Activated T-helper 1 cell treated with anti-CD3 and anti-CD28 coated beads, Interleukin-12 subunit alpha, Interleukin-12 subunit beta, Interleukin-2, Interleukin-4 antibody, amounts not matched to agents 30 ng/mL and 10 ng/mL and 1 ng/mL, durations not matched to agents 14 hours and 24 hours and 36 hours (primary cell): ENCODE measurements at regions of chr3 and their contacts with region 1.

Region 1: DNA sequence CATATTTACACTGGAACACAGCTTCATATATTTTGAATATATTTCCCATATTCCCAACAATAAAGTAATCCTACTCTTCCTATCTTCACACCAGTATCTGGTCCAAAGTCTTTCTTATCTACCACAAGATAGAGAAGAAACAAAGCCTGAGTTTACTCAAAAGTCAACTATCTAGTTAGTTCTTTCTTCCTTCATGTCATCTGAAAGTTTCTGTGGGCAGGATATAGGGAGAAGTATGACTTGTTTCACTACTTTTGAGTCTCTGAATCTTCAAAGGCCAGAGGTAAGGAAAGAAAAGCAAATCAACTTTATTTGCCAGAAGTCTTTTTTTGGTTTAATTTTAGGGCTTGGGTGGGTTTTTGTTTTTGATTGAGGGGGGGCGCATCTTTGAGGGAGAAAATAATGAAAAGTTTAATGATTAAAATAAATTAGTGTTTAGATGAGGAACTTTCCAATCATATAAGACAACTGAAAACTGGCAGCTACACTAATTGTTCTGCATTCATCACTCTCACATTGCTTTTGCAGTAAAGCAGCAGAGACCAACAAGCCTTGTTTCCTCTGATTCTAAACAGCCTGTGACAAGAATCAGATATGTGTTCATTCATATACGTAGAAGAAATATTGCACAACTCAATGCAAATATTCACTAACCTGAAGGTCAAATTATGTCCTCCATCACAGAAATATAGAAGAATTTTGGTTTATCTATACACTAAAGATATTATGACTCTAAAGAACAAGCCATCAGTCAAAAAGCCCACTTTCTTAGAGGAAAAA is 421.4 kb downstream of the SHQ1 start:
- DNase-seq: no peak
- H3K4me3 Mint-ChIP-seq: peak overlapping the region; percentile 69
- H3K27ac Mint-ChIP-seq: peak overlapping the region; percentile 97
- H3K4me1 Mint-ChIP-seq: peaks cover 62% of the 10 kb centered on the region
- H3K27me3 Mint-ChIP-seq: no peaks in the 10 kb centered on the region

Region 2: DNA sequence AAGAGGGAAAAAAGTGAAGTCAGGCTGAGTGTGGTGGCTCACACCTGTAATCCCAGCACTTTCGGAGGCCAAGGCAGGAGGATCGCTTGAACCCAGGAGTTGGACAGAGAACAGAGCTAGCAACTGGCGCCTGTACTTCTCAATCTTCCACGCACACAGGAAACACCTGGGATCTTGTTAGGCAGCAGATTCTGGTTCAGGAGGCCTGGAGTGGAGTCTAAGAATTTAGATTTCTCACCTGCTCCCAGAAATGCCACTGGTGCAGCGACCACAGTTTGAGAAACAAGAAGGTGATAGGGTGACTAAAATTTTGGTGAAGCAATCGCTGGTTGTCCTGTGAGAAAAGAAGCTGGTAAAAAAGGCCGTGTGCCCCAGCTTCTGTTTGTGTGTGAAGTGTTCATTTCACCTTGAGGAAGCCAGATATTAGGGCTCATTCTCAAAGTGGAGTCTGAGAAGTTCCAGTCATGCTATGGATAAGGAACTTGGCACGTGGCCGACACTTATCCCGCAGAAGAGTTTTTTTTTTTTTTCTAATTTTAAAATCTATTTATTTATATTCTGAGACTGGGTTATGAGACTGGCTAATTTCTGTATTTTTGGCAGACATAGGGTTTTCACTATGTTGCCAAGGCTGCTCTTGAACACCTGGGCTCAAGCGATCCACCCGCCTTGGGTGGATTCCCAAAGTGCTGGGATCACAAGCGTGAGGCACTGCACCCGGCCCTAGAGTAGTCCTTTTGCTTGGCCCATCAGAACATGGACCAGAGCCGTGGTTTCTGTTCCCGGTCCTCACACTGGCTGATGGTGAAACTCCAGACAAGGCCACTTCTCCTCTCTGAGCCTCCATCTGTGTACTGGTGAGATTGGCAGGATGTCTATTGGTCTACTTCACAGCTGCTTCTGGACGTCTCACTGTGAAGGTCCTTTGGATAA is 317.2 kb before region 1 on chr3:
- intact Hi-C with region 1: no loop called
- DNase-seq: no peak
- H3K4me3 Mint-ChIP-seq: no peak overlapping the region
- H3K27ac Mint-ChIP-seq: no peak overlapping the region
- H3K4me1 Mint-ChIP-seq: no peaks in the 10 kb centered on the region
- H3K27me3 Mint-ChIP-seq: peaks cover 12% of the 10 kb centered on the region

Region 3: DNA sequence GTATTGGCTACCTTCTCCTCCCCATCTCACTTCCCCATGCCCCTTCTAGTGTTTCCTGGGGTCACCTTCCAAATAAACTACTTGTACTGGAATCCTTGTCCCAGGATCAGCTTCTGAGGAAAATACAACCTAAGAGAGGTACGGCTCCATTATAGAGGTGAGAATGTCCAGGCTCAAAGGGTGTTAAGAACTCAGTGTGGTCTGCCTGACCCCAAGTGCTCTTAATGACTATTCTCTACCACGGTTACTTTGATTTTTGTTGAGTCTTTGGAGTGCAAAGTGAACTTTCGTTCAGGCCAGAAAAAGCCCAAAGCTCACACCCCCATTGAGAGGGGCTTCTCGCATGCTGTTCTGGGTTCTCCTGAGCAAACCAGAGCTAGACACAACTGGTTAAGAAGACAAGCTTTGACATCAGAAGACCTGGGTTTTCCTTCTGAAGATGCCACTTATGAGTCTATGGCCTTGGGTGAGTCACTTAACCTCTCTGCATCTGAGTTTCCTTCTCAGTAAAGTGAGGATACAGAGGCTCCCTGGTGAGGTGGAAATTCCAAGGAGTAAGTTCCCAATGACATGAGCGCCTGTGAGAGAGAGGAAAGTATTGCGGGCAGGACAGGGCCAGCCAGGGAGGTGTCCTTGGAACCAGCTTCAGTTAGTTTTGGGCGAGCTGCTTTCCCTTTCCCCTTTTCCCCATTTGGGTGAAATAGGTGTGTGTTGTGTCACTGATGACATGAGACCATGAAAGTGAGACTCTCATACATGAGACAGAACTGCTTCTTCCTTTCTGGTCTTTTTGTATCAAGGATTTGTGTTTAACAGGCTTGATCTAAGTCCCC is 166.8 kb before region 1 on chr3:
- intact Hi-C with region 1: loop called (anchors 5 kb)
- DNase-seq: no peak
- H3K4me3 Mint-ChIP-seq: no peak overlapping the region
- H3K27ac Mint-ChIP-seq: peak overlapping the region; percentile 81
- H3K4me1 Mint-ChIP-seq: peaks cover 24% of the 10 kb centered on the region
- H3K27me3 Mint-ChIP-seq: peaks cover 3% of the 10 kb centered on the region

Region 4: DNA sequence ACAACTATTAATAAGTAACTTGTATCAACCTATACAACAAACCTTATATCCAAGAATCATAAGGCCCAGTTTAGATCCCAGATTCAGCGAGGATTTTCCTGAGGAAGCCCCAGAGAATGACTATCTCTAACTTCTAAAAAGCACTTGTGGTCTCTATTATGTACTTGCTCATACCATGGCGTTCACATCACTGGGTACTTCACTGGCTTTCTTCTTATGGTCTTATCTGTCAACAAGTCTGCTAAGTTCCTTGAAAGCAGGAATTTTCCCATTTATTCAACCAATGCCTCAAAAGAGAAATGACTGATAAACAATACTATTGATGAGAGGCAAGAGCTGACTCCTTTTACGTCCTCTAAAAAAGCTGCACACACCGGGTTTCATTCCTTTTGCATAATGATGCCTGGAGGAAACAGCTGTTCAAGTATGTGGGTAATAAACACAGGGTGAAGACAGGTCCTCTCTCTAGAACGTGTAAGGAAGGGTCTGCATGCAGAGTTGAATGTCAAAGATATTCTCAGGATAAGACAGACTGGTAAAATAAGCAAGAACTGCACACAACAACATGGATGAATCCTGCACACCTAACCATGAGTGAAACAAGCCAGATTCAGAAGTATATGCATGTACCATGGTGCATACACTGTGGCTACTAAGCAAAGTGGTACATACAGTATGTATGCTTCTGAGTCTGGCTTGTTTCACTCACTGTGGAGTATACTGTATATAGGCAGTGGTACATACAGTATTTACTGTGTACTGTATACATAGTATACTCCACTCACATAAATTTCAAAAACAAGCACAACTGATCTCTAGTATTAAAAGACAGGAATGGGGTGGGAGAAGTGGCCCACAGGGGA is 12.7 kb after region 1 on chr3:
- intact Hi-C with region 1: loop called (anchors 1 kb)
- DNase-seq: no peak
- H3K4me3 Mint-ChIP-seq: no peak overlapping the region
- H3K27ac Mint-ChIP-seq: no peak overlapping the region
- H3K4me1 Mint-ChIP-seq: peaks cover 84% of the 10 kb centered on the region
- H3K27me3 Mint-ChIP-seq: no peaks in the 10 kb centered on the region

Region 5: DNA sequence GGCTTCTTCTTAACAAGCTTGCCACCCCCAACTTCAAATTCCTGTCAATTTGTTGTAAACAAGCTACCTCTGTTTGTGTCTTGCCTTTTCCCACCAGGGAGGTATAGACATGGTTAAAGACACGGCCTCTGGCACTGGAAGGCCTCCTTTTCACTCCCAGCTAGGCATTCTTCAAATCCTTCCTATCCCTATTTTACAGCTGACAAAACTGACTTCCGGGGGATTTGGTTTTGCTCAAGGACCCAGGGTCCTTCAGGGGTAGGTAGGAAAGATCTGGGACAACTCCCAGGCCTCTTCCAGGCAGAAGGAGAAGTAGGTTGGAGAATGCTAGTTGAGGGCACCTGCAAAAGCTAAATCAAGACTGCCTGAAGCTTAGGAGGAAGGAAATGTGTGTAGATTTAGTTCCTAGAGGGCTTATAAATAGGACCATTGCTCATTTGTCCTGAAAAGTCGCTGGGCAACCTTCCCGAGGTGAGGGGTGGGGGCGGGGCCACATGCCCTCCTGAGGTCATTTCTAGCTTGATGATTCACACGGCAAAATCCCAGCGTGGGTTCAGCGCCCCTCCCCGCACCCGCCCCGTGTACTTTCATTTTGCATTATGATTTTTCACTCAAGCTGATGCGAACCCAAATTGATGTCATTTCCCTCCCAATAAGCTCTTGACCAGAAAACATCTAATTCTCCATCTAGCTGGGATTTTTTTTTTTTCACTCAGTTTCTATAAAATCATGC is 55.9 kb after region 1 on chr3:
- intact Hi-C with region 1: loop called (anchors 1 kb)
- DNase-seq: peak; percentile 47
- H3K4me3 Mint-ChIP-seq: peak overlapping the region; percentile 68
- H3K27ac Mint-ChIP-seq: peak overlapping the region; percentile 94
- H3K4me1 Mint-ChIP-seq: peaks cover 73% of the 10 kb centered on the region
- H3K27me3 Mint-ChIP-seq: no peaks in the 10 kb centered on the region